ENCODE measurements at regions of chr9 and their contacts with region 1.

Region 1: DNA sequence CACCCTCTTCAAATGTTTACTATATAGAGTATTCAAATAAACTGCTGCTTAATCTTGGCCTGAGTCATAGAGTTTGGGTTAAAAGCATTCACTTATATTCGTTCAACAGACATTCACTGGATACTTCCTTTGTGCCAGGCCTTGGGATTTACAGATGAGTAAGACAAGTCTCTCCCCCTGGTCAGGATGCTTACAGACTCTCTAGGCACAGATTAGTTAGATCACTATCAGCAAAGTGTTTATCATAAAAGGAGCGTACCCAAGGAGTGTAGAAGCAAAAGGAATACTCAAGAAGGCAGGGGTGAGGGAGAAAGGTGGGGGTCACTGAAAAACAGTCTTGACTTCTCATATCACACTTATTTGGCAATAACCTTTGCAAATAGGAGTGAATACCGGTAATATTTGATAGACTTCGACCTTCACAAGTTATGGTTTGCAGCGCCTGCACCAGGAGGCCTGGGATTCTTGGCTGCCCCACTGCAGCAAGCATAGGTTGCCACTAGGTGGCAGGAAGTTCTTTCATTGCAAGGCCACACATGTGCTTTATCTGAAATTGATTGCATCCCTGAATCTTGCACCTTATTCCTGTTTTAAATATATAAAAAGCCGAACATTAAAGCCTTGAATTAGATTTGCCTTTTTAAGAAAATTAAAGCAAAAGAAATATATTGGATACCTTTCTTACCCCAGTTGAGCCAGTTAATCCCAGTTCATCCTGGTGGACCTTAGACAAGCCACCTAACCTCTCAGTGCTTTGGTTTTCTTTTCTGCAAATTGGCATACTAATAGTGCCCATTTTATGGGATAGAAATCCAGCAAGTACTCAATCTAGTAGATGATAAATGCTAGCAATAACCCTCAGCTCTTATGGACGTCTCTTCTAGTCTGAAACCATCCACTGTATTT is 6.5 kb upstream of the TRMT10B start:
- DNase-seq: peak; percentile 65
- ATAC-seq: peak; percentile 80
- H3K4me3 ChIP-seq: no peak overlapping the region
- H3K4me3 Mint-ChIP-seq: no peak overlapping the region
- H3K27ac ChIP-seq: no peak overlapping the region
- H3K27ac Mint-ChIP-seq: no peak overlapping the region
- H3K4me1 ChIP-seq: no peaks in the 10 kb centered on the region
- H3K4me1 Mint-ChIP-seq: no peaks in the 10 kb centered on the region
- H3K27me3 ChIP-seq: peaks cover 0 to 5% (median 0%) of the 10 kb centered on the region in 4 experiments
- H3K27me3 Mint-ChIP-seq: no peaks in the 10 kb centered on the region
- CTCF ChIP-seq: peak; percentile 92

Region 2: GRCh38 chr9:37650873-37651768 is 96.0 kb before region 1 on chr9 and contains the start of gene FRMPD1:
- CTCF ChIA-PET with region 1: no interaction called
- POLR2A ChIA-PET with region 1: no interaction called
- intact Hi-C with region 1: loop called (anchors 10 kb)
- DNase-seq: peak; percentile 76
- ATAC-seq: peak; percentile 95
- H3K4me3 ChIP-seq: peak within 1 kb of the TSS in 4 of 5 experiments; percentile 37 to 67 (median 60)
- H3K4me3 Mint-ChIP-seq: peak within 1 kb of the TSS; percentile 84
- H3K27ac ChIP-seq: no peak within 1 kb of the TSS
- H3K27ac Mint-ChIP-seq: peak within 1 kb of the TSS; percentile 20
- H3K4me1 ChIP-seq: peaks cover 13% of the 10 kb centered on the region in 2 donors
- H3K4me1 Mint-ChIP-seq: peaks cover 18% of the 10 kb centered on the region
- H3K27me3 ChIP-seq: peaks cover 0 to 49% (median 27%) of the 10 kb centered on the region in 4 experiments
- H3K27me3 Mint-ChIP-seq: peaks cover 75% of the 10 kb centered on the region
- CTCF ChIP-seq: no peak
- total RNA-seq, gene FRMPD1: 0.05 TPM in 1 of 2 replicates, not detected in the other

Measured in B cell (primary cell).